Heart right ventricle (tissue), 16 donors: ENCODE measurements at regions of chr3 and their contacts with region 1.

Region 1: DNA sequence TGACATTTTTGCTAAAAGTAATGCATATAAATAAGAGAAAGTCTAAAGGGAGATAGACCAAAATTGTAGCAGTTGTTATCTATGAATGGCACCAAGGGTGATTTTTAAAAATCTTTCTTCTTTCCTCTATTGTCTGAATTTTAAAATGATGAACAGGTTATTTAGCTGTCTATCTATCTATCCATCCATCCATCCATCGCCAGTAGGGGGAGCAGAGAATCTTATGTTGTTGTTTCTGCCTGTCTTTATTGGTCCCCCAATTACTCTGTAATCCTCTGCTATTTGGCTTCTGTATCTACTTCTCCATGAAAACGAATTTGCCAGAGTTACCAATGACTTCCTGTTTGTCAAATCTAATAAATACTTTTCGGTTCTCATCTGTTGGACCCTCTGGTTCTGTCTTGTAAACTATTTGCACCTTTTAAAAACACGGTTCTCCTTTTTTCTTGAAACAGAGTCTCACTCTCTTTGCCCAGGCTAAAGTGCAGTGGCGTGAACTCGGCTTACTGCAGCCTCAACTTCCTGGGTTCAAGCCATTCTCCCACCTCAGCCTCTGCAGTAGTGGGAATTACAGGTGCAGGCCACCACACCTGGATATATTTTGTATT is 86.0 kb downstream of the ECT2 start:
- DNase-seq: peak in 1 of 2 donors; percentile 62
- ATAC-seq: peak in 2 of 8 donors; percentile 63 to 74
- H3K4me3 ChIP-seq: no peak overlapping the region
- H3K27ac ChIP-seq: no peak overlapping the region
- H3K4me1 ChIP-seq: no peaks in the 10 kb centered on the region
- H3K27me3 ChIP-seq: no peaks in the 10 kb centered on the region
- CTCF ChIP-seq: peak; percentile 23 to 72 (median 63)

Region 2: DNA sequence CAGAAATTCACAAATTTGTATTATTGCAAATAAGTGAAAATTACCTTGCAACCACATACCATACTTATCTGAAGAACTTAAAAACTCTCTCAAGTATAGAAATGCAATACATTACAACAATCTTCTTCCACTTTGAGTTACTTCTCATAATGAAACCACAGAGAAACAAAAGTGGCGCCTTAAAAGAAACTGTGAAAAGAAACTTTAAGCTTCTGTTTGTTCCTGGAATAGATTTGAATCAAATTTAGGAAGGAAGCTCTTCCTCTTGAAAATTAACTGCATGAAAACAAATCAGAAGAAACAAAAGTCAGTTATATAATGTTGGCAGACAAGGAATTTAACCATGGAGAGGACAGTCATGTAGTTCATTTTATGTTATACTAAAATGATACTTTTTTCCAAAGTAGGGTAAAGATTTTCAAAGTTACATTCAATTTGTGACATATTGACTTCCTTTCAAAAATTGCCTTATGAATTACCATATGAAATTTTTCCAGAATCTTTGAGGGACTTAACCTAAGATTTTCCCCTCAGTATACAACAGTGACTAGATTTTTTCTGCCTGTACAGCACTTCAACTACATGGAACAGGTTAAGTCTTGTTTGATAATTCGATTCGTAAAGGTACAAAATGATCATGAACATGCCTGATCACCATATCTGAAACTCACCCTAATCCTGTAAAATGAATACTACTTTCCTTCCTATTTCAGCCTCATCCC is 255.7 kb before region 1 on chr3:
- intact Hi-C with region 1: no loop called
- DNase-seq: no peak
- ATAC-seq: peak in 6 of 8 donors; percentile 23 to 71 (median 53)
- H3K4me3 ChIP-seq: no peak overlapping the region
- H3K27ac ChIP-seq: peak overlapping the region in 9 of 10 donors; percentile 47 to 94 (median 81)
- H3K4me1 ChIP-seq: peaks cover 3 to 56% (median 24%) of the 10 kb centered on the region in 9 donors
- H3K27me3 ChIP-seq: no peaks in the 10 kb centered on the region
- CTCF ChIP-seq: no peak

Region 3: DNA sequence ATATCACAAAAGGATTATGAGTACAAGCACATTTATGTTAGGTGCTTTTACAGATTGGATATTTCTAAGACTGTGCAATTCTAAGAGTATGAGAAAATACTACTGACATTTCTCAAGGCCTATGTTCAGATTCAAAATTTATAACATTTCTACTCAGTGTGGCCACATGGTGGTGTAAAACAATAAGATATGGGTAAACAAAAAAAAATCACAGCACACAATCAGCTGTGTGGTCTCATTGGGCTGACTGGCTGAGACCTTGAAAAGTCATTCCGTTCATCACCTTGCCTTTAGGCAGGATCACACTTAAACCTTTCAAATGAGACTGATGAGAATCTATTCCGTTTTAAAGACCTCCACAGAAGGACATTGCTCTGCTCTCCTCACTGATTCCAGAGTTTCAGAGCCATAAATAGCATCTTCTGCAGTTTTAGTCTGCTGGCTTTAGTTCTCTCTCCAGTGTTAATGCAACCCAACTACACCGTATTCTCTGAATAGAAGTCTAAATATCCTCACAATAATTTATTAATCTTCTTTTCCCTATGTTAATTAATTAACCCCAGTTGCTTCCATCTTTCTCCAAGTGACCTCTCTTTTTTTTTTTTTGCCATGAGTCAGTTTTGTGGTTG is 146.4 kb after region 1 on chr3:
- intact Hi-C with region 1: loop called in 1 of 10 experiments (anchors 10 kb)
- DNase-seq: no peak
- ATAC-seq: peak in 6 of 8 donors; percentile 38 to 83 (median 58)
- H3K4me3 ChIP-seq: no peak overlapping the region
- H3K27ac ChIP-seq: no peak overlapping the region
- H3K4me1 ChIP-seq: peaks cover 0 to 14% (median 0%) of the 10 kb centered on the region in 9 donors
- H3K27me3 ChIP-seq: no peaks in the 10 kb centered on the region
- CTCF ChIP-seq: peak in 8 of 9 donors; percentile 21 to 55 (median 38)